MCF 10A (cell line): ENCODE measurements at regions of chr11 and their contacts with region 1.

Region 1: GRCh38 chr11:77198440-77198849 is 70.4 kb downstream of the MYO7A start:
- DNase-seq: peak; percentile 12
- H3K4me3 Mint-ChIP-seq: no peak overlapping the region
- H3K27ac Mint-ChIP-seq: no peak overlapping the region
- H3K4me1 Mint-ChIP-seq: no peaks in the 10 kb centered on the region
- H3K27me3 Mint-ChIP-seq: no peaks in the 10 kb centered on the region
- CTCF ChIP-seq: peak; percentile 12

Region 2: DNA sequence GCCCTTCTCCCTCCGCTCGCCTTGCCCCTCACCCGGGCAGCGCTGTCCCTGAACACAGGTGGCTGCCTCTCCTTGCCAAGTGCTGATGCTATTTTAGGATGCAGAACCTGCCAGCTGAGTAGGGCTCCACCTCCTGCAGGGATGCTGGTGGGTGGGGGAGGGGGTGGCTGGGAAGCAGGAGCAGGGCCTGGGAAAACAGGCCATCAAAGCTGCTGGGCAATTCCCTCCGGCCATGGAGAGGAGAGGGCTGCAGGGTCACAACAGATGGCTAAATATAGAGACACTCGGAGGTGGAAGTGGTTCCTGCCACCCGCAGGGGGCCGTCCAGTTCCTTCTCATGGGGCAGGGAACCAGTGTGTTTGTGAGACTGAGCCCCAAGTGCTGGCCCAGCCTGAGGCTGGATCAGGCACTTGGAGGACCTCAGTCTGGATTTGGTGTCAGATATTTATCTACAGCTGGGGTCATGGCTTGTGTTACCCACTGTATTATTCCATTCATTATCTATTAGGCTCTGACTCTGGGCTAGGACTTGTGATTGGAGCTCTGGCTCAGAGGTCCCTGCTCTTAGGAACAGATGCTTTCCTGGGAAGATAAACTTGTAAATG is 587.5 kb before region 1 on chr11:
- CTCF ChIA-PET with region 1: no interaction called
- POLR2A ChIA-PET with region 1: no interaction called
- intact Hi-C with region 1: no loop called
- DNase-seq: no peak
- H3K4me3 Mint-ChIP-seq: no peak overlapping the region
- H3K27ac Mint-ChIP-seq: no peak overlapping the region
- H3K4me1 Mint-ChIP-seq: no peaks in the 10 kb centered on the region
- H3K27me3 Mint-ChIP-seq: no peaks in the 10 kb centered on the region
- CTCF ChIP-seq: no peak

Region 3: DNA sequence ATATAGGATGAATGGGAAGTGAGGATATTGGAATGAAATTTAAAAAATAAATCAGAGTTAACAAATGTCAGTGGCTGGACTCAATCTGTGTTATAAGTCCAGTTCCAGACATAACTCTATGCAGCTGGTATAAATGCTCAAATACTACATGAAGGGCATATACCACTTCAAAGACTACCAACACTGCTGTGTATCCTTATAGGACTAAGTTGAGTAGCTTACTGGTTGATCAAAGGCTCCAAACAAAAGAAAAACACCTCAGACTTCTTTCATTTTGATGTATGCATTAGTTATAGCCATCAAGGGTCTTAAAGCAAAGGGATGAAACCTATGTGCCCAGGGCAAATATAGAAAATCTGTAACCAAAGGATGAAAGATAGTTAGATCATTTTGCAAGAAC is 189.3 kb after region 1 on chr11:
- CTCF ChIA-PET with region 1: interaction called, 4 read pairs
- POLR2A ChIA-PET with region 1: no interaction called
- intact Hi-C with region 1: loop called (anchors 1 kb)
- DNase-seq: no peak
- H3K4me3 Mint-ChIP-seq: no peak overlapping the region
- H3K27ac Mint-ChIP-seq: no peak overlapping the region
- H3K4me1 Mint-ChIP-seq: no peaks in the 10 kb centered on the region
- H3K27me3 Mint-ChIP-seq: no peaks in the 10 kb centered on the region
- CTCF ChIP-seq: no peak

Region 4: DNA sequence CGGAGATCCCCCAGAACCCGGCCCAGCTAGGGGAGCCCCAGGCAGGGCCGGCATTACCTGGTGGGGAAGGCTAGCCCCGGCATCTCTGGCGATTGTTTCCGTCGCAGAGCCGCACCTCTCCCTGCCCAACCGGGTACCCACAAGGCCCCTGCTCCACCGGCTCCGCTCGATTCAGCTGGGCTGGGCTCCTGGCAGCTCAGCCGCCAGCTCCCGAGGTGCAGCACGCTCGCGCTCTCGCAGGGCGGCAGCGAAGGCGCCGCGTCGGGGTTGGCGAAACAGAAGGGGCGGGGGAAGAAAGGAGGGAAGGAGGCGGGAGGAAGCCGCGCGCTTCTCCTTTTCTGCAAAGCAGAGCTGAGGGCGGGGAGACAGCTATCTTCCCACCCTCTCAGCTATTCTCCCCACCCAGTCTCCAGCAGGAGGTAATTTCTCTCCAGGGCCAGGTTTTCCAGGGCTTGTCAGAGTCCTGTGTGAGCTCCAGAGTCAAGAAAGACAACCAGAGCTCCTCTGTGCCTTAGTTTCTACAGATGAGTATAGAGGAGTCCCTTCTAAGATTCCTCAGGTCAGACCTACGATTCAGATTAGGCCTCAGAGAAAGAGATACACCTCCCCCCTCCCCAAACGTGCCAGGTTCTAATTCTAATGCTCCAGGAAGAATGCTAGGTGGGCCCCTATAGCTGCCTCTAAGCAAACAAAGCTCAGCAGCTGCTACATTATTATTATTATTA is 213.4 kb after region 1 on chr11:
- CTCF ChIA-PET with region 1: interaction called, 4 read pairs
- POLR2A ChIA-PET with region 1: no interaction called
- intact Hi-C with region 1: loop called (anchors 2 kb)
- DNase-seq: peak; percentile 90
- H3K4me3 Mint-ChIP-seq: peak overlapping the region; percentile 90
- H3K27ac Mint-ChIP-seq: peak overlapping the region; percentile 87
- H3K4me1 Mint-ChIP-seq: peaks cover 37% of the 10 kb centered on the region
- H3K27me3 Mint-ChIP-seq: no peaks in the 10 kb centered on the region
- CTCF ChIP-seq: no peak

Region 5: GRCh38 chr11:77619576-77620198 is 421.2 kb after region 1 on chr11:
- CTCF ChIA-PET with region 1: interaction called, 19 read pairs
- POLR2A ChIA-PET with region 1: interaction called, 3 read pairs
- intact Hi-C with region 1: loop called (anchors 1 kb)
- DNase-seq: peak; percentile 58
- H3K4me3 Mint-ChIP-seq: no peak overlapping the region
- H3K27ac Mint-ChIP-seq: no peak overlapping the region
- H3K4me1 Mint-ChIP-seq: no peaks in the 10 kb centered on the region
- H3K27me3 Mint-ChIP-seq: no peaks in the 10 kb centered on the region
- CTCF ChIP-seq: peak; percentile 62